ENCODE measurements at regions of chr12 and their contacts with region 1.

Region 1: GRCh38 chr12:42482445-42483237 is 106.9 kb downstream of the PRICKLE1 start:
- DNase-seq: peak; percentile 85
- ATAC-seq: peak; percentile 91

Region 2: GRCh38 chr12:42237052-42237852 is 245.4 kb before region 1 on chr12:
- intact Hi-C with region 1: loop called (anchors 10 kb)
- DNase-seq: peak; percentile 87
- ATAC-seq: peak; percentile 67

Region 3: GRCh38 chr12:42589465-42590329 is 107.1 kb after region 1 on chr12 and contains the start of gene PRICKLE1:
- intact Hi-C with region 1: loop called (anchors 5 kb)
- DNase-seq: peak; percentile 74
- ATAC-seq: peak; percentile 87
- total RNA-seq, gene PRICKLE1: 14.5 TPM

Region 4: DNA sequence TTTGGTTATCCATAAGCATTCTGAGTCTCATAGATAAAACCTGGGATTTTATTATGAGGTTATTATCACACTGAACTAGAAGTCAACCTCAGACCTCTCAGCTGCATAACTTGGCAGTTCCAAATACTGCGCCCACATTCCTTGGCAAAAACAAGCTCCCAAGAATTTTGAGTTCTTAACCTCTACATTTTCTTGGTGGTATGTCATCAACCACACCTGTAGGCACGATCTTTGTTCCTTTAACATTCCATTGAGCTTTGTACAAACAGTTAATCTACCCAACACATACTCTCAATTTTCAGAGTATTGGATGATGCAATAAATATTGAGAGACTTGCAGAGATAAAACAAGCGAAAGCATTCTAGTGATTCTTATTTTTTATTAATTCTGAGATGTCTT is 478.8 kb after region 1 on chr12:
- intact Hi-C with region 1: loop called (anchors 10 kb)
- DNase-seq: no peak
- ATAC-seq: no peak

Region 5: GRCh38 chr12:43338848-43339526 is 856.3 kb after region 1 on chr12:
- intact Hi-C with region 1: loop called (anchors 2 kb)
- DNase-seq: no peak
- ATAC-seq: peak; percentile 92